AG04449 (cell line): ENCODE measurements at regions of chr10 and their contacts with region 1.

Region 1: GRCh38 chr10:59625721-59626522 is 83.7 kb downstream of the SLC16A9 start:
- DNase-seq: peak; percentile 12
- H3K4me3 ChIP-seq: no peak overlapping the region
- CTCF ChIP-seq: peak; percentile 71

Region 2: DNA sequence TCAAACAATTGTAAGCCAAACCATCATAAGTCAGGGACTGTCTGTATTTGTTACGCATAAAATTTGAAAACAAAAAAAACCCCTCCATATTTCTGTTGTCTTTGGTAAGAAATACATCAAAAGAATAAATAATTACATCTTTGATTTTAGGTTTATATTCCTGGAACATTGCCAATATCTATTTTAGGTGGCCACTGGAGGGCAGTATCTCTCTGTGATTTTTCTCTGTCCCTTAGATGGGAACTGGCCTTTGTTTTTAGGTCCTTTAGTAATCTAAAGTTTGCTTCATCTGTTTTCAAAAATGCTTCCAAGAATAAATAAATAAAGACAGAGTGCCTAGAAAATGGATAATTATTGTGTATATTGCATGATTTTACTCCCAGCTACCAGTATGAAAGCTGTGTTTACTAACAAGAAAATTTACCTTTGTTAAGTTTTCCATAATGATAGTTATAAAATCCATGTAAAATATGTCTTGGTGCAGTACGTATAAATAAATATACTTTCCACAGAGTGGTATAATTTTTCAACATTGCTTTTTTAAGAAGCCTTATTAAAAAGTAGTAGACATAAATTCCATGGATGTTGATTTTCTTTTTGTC is 385.2 kb before region 1 on chr10:
- CTCF ChIA-PET with region 1: interaction called, 73 read pairs
- POLR2A ChIA-PET with region 1: no interaction called
- DNase-seq: no peak
- H3K4me3 ChIP-seq: no peak overlapping the region
- CTCF ChIP-seq: peak; percentile 31

Region 3: DNA sequence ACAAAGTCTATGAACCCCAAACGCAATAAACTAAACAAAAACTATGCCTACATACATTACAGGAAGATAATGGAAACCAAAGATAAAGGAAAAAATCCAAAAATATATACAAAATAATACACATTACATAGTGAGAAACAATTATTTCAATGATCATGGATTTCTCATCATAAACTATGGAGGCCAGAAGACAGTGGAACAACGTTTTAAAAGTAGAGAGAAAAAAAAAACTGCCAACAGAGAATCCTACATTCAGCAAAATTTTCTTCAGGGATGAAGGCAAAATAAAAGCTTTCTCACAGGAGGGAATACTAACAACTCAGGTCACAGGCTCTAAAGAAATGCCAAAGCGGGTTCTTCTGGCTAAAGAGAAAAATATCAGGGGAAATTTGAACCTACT is 220.7 kb before region 1 on chr10:
- CTCF ChIA-PET with region 1: no interaction called
- POLR2A ChIA-PET with region 1: no interaction called
- DNase-seq: no peak
- H3K4me3 ChIP-seq: no peak overlapping the region
- CTCF ChIP-seq: no peak

Region 4: DNA sequence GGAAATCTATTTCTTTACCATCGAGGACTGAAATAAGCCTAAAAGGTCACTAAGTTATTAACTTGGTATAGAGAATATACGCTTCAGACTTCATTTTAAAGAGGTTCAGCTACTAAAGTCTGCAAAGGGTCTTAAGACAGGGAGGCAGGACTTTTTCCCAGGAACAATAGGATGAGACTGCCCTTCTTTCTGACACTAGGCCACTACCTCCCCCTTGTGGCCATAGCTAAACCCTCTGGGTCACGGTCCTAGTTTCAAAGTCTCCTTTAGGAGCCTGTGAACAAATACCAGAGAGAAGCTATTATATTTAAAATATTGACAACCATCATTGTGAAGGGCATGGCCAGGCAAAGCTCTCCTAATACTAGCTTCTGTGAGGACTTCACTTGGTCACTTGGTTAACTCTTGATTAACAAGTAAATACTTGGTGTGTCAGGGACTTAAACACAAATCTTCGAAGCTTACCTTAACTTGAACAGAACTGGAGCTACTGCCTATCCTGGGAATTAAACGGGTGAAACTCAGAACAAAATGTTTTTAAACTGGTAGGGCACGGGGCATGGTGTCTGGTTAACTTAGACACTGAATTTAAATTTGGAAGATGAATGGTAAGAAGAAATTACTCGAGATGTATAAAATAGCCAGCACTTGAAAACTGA is 204.8 kb after region 1 on chr10:
- CTCF ChIA-PET with region 1: interaction called, 22 read pairs
- POLR2A ChIA-PET with region 1: no interaction called
- DNase-seq: no peak
- H3K4me3 ChIP-seq: no peak overlapping the region
- CTCF ChIP-seq: peak; percentile 77

Region 5: DNA sequence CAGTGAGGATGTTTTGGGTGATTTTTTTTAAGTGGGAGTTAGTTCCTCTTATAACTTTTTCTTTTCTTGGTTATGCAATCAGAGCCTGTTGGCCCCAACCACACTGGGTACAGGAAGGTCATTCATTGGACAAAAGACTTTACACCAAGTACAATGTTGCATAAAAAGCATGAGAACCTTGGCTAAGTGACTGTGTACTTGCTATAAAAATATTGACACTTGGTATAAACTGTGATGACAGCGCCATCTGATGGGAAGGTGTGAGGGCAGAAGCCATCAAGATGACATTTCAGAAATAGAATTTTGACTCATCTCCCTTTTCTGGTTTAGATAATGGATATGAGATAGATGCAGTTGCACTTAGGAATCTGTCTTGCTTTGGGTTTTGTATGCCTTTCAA is 406.8 kb after region 1 on chr10:
- CTCF ChIA-PET with region 1: interaction called, 65 read pairs
- POLR2A ChIA-PET with region 1: no interaction called
- DNase-seq: no peak
- H3K4me3 ChIP-seq: no peak overlapping the region
- CTCF ChIP-seq: peak; percentile 29

Region 6: GRCh38 chr10:60069311-60069710 is 443.4 kb after region 1 on chr10:
- CTCF ChIA-PET with region 1: no interaction called
- POLR2A ChIA-PET with region 1: no interaction called
- DNase-seq: no peak
- H3K4me3 ChIP-seq: no peak overlapping the region
- CTCF ChIP-seq: no peak

Region 7: DNA sequence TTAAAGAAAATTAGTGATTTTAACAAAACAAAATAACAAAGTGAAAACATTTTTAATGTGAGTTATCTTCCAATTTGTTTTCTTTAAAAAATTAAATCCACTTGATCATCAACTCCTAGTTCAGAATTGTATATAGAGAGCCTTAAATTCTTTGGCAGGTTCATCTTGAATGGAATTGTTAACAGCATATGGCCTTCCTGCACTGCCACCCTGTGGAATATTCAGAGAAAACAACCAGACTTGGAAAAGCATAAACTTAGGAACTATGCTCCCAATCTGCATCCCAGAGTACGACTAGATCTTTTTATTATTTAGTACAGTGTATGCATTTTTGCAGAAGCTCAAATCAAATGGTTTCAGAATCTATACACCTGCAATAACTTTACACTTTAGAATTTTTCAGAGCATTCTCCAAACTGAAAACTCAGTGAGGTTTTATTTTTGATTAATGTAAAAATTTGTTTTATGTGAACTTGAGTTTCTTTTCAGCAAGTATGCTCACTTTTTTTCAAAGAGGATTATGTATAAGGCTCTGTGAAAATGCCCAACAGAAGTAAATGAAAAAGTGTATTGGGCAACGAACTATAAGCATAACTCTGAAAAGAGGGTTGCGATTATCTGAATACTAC is 808.6 kb after region 1 on chr10:
- CTCF ChIA-PET with region 1: interaction called, 13 read pairs
- POLR2A ChIA-PET with region 1: no interaction called
- DNase-seq: no peak
- H3K4me3 ChIP-seq: no peak overlapping the region
- CTCF ChIP-seq: peak; percentile 49